ENCODE measurements at regions of chr5 and their contacts with region 1.

Region 1: DNA sequence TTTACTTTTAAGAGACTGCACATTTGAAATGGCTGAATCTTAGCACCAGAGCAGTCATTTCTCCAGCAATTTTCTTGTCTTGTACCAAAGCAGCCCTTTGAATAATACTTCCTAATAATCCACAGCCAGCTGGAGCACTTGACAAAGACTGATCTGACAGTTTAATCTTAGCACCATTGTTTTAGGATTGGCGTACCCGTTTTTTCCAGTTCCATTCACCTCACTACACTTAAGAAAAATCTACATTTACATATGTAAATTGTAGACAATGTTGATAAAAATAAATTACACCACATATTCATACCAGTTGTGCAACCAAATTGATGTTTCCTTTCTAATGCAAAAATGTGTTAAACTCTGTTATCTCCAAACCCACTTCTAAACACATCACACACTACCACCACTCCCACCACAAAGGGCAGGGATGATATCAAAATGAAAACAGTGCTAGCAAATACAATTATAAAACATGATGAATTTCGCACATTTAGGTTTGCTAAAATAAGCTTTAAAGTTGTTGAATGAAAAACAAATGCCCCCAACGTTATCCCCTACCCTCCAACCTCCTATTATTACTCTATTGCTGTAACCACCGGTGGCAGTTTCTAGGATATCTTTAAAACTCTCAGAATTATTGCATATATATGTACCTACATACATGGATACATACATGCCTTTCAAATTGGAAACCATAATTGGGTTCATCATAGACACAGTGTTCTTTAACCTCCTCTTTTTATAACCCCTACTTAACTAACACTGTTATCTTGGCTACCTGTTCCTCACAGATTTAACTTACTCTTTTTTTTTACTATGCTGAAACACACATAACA is 21.5 kb downstream of the SERINC5 start:
- DNase-seq: no peak
- H3K4me3 Mint-ChIP-seq: no peak overlapping the region
- H3K27ac Mint-ChIP-seq: peak overlapping the region; percentile 25
- H3K4me1 Mint-ChIP-seq: peaks cover 35% of the 10 kb centered on the region
- H3K27me3 Mint-ChIP-seq: no peaks in the 10 kb centered on the region

Region 2: GRCh38 chr5:80165452-80165851 is 68.9 kb before region 1 on chr5:
- intact Hi-C with region 1: no loop called
- DNase-seq: no peak
- H3K4me3 Mint-ChIP-seq: no peak overlapping the region
- H3K27ac Mint-ChIP-seq: no peak overlapping the region
- H3K4me1 Mint-ChIP-seq: peaks cover 6% of the 10 kb centered on the region
- H3K27me3 Mint-ChIP-seq: no peaks in the 10 kb centered on the region

Region 3: DNA sequence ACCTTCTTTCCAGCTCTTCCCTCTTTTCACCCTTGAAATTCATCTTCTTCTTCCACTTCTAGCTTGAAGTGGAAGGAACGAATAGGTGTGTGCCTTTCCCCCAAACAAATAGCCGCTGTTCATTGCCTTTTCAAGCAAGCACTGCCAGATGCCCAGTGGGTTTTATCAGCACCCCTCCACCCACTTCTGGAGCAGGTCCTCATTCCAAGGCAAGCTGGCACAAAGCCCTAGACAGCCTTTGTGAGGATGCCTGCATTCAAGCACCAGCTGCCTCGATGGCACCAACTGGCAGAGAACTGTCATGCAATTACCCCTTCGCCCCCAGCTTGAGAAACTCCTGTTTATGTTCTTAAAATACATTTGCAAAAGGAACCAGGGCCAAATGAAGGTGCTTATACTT is 14.9 kb before region 1 on chr5:
- intact Hi-C with region 1: loop called (anchors 2 kb)
- DNase-seq: no peak
- H3K4me3 Mint-ChIP-seq: no peak overlapping the region
- H3K27ac Mint-ChIP-seq: peak overlapping the region; percentile 20
- H3K4me1 Mint-ChIP-seq: peaks cover 48% of the 10 kb centered on the region
- H3K27me3 Mint-ChIP-seq: no peaks in the 10 kb centered on the region

Region 4: GRCh38 chr5:80372780-80373179 is 138.4 kb after region 1 on chr5:
- intact Hi-C with region 1: no loop called
- DNase-seq: no peak
- H3K4me3 Mint-ChIP-seq: no peak overlapping the region
- H3K27ac Mint-ChIP-seq: no peak overlapping the region
- H3K4me1 Mint-ChIP-seq: no peaks in the 10 kb centered on the region
- H3K27me3 Mint-ChIP-seq: peaks cover 5% of the 10 kb centered on the region

Measured in activated T-helper 1 cell treated with anti-CD3 and anti-CD28 coated beads, Interleukin-12 subunit alpha, Interleukin-12 subunit beta, Interleukin-2, Interleukin-4 antibody, amounts not matched to agents 30 ng/mL and 10 ng/mL and 1 ng/mL, durations not matched to agents 14 hours and 24 hours and 36 hours (primary cell).